Caco-2 (cell line): ENCODE measurements at regions of chr10 and their contacts with region 1.

Region 1: GRCh38 chr10:109883859-109884771 is 39.2 kb downstream of the XPNPEP1 start:
- DNase-seq: peak; percentile 82 to 87
- H3K4me3 ChIP-seq: no peak overlapping the region
- H3K4me3 Mint-ChIP-seq: no peak overlapping the region
- H3K27ac Mint-ChIP-seq: peak overlapping the region; percentile 83
- H3K4me1 ChIP-seq: peaks cover 11% of the 10 kb centered on the region; the same call in 1 of the 2 replicates
- H3K4me1 Mint-ChIP-seq: peaks cover 8% of the 10 kb centered on the region
- H3K27me3 ChIP-seq: no peaks in the 10 kb centered on the region
- H3K27me3 Mint-ChIP-seq: no peaks in the 10 kb centered on the region
- CTCF ChIP-seq: peak; percentile 94 to 96

Region 2: DNA sequence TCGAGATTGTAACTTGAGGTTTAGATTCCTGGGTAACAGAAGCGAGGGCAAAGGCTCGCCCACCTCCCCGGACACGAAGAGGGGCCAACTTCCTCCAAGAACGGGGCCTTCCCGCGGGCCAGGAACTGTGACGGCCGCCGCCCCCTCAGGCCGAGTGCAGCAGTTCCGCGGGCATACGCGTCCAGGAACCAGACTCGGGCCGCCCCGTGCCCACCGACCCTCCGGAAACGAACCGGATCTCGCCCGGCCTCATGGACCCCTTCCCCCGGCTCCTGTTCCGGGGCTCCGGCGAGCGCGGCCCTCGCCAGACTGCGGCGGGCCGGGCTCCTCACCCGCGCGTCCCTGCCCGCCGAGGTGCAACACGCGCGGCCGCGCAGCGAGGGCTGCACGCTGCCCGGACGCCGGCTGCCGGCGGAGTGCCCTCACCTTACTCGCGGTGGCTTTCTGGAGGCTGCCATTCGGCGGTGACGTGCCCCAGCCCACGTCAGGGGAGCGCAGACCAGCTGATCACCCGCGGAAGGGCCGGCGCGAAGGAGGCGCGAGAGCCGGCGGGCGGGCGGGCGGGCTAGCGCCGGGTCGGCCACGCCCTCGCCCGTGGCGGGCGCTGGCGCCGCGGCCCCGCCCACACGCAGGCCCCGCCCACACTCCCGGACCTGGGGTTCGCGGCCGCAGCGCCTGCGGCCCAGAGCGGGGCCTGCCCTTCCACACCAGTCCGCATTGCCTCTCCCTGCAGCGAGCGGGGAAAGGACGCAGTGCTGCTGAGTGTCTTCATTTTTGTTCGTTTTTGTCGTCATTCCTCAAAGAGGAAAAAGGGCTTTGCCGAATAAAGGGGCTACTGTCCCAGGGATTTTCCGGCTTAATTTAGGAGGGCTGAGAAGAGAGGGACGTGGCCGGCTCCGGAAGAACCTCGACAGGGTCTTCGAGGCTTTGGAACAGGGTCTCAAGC is 39.1 kb after region 1 on chr10 and contains the start of gene XPNPEP1:
- CTCF ChIA-PET with region 1: interaction called, 6 read pairs
- POLR2A ChIA-PET with region 1: no interaction called
- intact Hi-C with region 1: loop called (anchors 2 kb)
- DNase-seq: peak; percentile 87 to 89
- H3K4me3 ChIP-seq: peak within 1 kb of the TSS; percentile 97
- H3K4me3 Mint-ChIP-seq: peak within 1 kb of the TSS; percentile 63
- H3K27ac Mint-ChIP-seq: peak within 1 kb of the TSS; percentile 87
- H3K4me1 ChIP-seq: peaks cover 34% of the 10 kb centered on the region
- H3K4me1 Mint-ChIP-seq: peaks cover 35% of the 10 kb centered on the region
- H3K27me3 ChIP-seq: no peaks in the 10 kb centered on the region
- H3K27me3 Mint-ChIP-seq: no peaks in the 10 kb centered on the region
- CTCF ChIP-seq: no peak
- total RNA-seq, gene XPNPEP1: 76.6 and 92.4 TPM in 2 replicates

Region 3: GRCh38 chr10:110007701-110008517 is 123.8 kb after region 1 on chr10 and contains the start of gene ADD3:
- CTCF ChIA-PET with region 1: interaction called, 15 read pairs
- POLR2A ChIA-PET with region 1: no interaction called
- intact Hi-C with region 1: loop called (anchors 2 kb)
- DNase-seq: peak; percentile 96 to 97
- H3K4me3 ChIP-seq: peak within 1 kb of the TSS; percentile 94
- H3K4me3 Mint-ChIP-seq: no peak within 1 kb of the TSS
- H3K27ac Mint-ChIP-seq: no peak within 1 kb of the TSS
- H3K4me1 ChIP-seq: peaks cover 47% of the 10 kb centered on the region
- H3K4me1 Mint-ChIP-seq: peaks cover 11% of the 10 kb centered on the region
- H3K27me3 ChIP-seq: no peaks in the 10 kb centered on the region
- H3K27me3 Mint-ChIP-seq: no peaks in the 10 kb centered on the region
- CTCF ChIP-seq: no peak
- total RNA-seq, gene ADD3: 236 and 264 TPM in 2 replicates

Region 4: DNA sequence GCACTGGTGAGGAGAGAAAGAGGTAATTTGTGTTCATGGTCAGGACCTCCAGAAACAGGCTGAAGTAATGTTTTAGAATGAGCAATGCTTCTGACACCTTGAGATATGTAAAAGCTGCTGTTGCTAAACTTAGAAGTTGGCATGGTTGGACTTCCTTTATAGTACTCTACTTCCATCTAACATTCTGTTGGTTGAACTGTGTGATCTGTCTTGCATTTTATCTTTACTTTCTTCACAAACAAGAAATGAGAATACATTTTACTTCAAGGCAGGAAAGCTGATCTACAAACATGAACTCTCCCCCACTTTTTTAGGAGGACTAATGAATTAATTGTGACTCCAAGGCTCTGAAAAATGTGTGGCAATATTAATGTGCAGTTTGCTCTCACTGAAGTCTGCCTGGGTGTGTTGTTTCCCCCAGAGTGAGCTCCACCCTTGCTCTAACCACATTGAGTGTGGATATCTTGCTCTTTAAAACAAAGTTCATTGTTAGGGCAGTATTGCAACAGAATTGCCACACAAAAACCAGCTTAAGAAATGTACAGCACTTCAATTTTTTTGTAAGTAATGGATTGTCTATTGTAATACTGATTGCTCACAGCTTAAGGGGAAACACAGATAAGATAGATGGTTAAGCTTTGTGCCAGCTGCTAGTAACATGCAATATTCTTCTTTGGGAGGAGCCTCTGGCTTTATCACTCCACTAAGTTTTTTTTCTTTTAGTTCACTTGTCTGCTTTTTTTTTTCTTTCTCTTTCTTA is 192.6 kb after region 1 on chr10:
- CTCF ChIA-PET with region 1: interaction called, 10 read pairs
- POLR2A ChIA-PET with region 1: interaction called, 3 read pairs
- intact Hi-C with region 1: no loop called
- DNase-seq: peak; percentile 50 to 69
- H3K4me3 ChIP-seq: no peak overlapping the region
- H3K4me3 Mint-ChIP-seq: peak overlapping the region; percentile 47
- H3K27ac Mint-ChIP-seq: peak overlapping the region; percentile 36
- H3K4me1 ChIP-seq: peaks cover 59% of the 10 kb centered on the region
- H3K4me1 Mint-ChIP-seq: peaks cover 53% of the 10 kb centered on the region
- H3K27me3 ChIP-seq: no peaks in the 10 kb centered on the region
- H3K27me3 Mint-ChIP-seq: no peaks in the 10 kb centered on the region
- CTCF ChIP-seq: no peak

Region 5: GRCh38 chr10:110225756-110226542 is 341.8 kb after region 1 on chr10:
- CTCF ChIA-PET with region 1: interaction called, 3 read pairs
- POLR2A ChIA-PET with region 1: no interaction called
- intact Hi-C with region 1: loop called (anchors 2 kb)
- DNase-seq: peak; percentile 93 to 95
- H3K4me3 ChIP-seq: peak overlapping the region; percentile 98
- H3K4me3 Mint-ChIP-seq: peak overlapping the region; percentile 86
- H3K27ac Mint-ChIP-seq: peak overlapping the region; percentile 62
- H3K4me1 ChIP-seq: peaks cover 9% of the 10 kb centered on the region
- H3K4me1 Mint-ChIP-seq: peaks cover 28% of the 10 kb centered on the region
- H3K27me3 ChIP-seq: no peaks in the 10 kb centered on the region
- H3K27me3 Mint-ChIP-seq: no peaks in the 10 kb centered on the region
- CTCF ChIP-seq: peak; percentile 60 to 81